ENCODE measurements at regions of chr16 and their contacts with region 1.

Region 1: DNA sequence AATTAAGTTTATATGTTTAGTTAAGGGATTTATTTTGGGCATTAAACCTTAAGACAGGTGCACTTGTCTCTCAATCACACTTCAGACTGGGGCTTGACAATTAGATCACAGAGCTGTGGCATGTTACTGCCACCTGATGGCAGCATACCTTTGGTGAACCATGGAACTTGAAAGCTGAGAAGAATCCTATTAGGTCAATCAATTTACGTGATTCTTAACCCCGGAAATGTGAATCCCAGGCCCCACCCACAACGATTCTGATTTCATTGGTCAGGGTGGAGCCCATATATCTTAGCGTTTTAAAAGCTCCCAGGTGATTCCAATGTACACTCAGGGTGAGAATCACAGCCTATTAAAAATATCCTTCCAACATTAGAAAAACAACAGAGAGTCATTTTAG is 91.0 kb downstream of the GSG1L start:
- DNase-seq: peak; percentile 66
- ATAC-seq: peak; percentile 80
- H3K4me3 Mint-ChIP-seq: no peak overlapping the region
- H3K27ac Mint-ChIP-seq: no peak overlapping the region
- H3K4me1 Mint-ChIP-seq: peaks cover 3% of the 10 kb centered on the region
- H3K27me3 Mint-ChIP-seq: peaks cover 12% of the 10 kb centered on the region

Region 2: GRCh38 chr16:28058839-28059589 is 86.5 kb after region 1 on chr16:
- CTCF ChIA-PET with region 1: no interaction called
- POLR2A ChIA-PET with region 1: no interaction called
- intact Hi-C with region 1: loop called in 1 of 2 experiments (anchors 5 kb)
- DNase-seq: peak; percentile 18
- ATAC-seq: no peak
- H3K4me3 Mint-ChIP-seq: no peak overlapping the region
- H3K27ac Mint-ChIP-seq: no peak overlapping the region
- H3K4me1 Mint-ChIP-seq: peaks cover 5% of the 10 kb centered on the region
- H3K27me3 Mint-ChIP-seq: peaks cover 43% of the 10 kb centered on the region

Measured in activated CD4-positive, alpha-beta T cell treated with anti-CD3 and anti-CD28 coated beads for 36 hours (primary cell).